Activated CD4-positive, alpha-beta T cell treated with anti-CD3 and anti-CD28 coated beads, Interleukin-2, amount 10 ng/mL, durations not matched to agents 24 days and 14 days (primary cell): ENCODE measurements at regions of chr15 and their contacts with region 1.

Region 1: DNA sequence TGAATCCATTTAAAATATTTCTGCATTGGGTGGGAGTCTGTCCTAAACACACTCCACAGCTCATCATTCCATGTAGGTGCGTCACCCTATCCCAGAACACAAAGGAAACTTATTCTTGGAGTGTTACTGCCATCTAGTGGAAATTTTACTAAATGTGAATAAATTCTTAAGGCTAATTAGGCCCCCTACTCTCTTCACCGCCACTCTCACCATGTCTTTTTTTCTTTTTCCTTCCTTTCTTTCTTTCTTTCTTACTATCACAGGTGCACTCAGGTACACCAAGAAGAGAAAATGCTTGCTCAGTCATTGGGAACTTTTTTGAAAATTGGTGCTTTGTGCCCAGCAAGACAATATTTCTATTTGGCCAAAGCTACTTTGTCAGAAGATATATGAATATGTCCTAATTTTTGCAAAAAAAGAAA is 26.4 kb upstream of the ATP8B4 start:
- DNase-seq: peak; percentile 62
- H3K4me3 Mint-ChIP-seq: no peak overlapping the region
- H3K27ac Mint-ChIP-seq: no peak overlapping the region
- H3K4me1 Mint-ChIP-seq: peaks cover 45% of the 10 kb centered on the region
- H3K27me3 Mint-ChIP-seq: no peaks in the 10 kb centered on the region

Region 2: DNA sequence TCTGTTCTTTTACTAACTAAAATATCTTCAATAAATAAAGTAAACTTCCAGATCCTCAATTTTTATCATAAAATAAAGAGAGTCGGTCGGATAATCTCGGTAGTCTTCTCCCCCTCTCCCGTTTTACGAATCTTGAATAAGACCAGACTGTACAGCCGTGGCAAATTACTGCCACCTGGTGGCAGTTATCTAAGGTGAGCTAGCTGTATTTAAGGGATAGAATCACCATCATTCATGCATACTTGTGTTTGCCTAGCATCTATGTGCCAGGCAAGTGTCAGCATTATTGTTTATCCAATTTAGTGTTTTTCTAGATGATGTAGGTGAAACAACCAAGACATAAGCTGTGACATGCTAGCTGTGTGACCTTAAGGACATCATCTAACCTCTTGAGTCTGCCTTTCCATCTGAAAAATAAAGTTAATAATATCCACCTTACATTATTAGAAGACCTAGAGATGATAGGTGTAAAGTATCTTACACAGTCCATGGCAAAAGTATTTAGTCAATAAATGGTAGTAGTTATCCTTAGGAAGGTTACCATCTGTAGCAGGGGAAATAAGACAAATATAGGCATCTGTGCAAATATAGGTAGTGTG is 1792.9 kb before region 1 on chr15:
- intact Hi-C with region 1: loop called (anchors 10 kb)
- DNase-seq: peak; percentile 86
- H3K4me3 Mint-ChIP-seq: no peak overlapping the region
- H3K27ac Mint-ChIP-seq: no peak overlapping the region
- H3K4me1 Mint-ChIP-seq: peaks cover 2% of the 10 kb centered on the region
- H3K27me3 Mint-ChIP-seq: no peaks in the 10 kb centered on the region

Region 3: DNA sequence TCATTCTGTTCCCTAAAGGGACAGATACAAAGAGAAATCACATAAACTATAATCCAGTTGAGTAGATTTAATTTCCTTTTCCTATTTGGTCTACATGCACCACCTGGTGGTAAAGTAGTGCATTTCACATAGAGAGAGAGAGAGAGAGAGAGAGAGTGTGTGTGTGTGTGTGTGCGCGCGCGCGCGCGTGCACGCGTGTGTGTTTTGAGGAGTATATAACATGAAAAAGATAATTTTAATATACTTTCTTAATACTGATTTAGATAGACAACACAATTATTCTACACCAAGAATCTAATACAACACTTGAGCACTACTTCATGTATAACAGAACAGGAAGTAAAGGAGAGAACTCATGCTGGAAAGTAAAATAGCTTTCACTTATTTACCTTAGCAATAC is 723.5 kb before region 1 on chr15:
- intact Hi-C with region 1: loop called (anchors 10 kb)
- DNase-seq: peak; percentile 73
- H3K4me3 Mint-ChIP-seq: peak overlapping the region; percentile 2
- H3K27ac Mint-ChIP-seq: peak overlapping the region; percentile 23
- H3K4me1 Mint-ChIP-seq: peaks cover 4% of the 10 kb centered on the region
- H3K27me3 Mint-ChIP-seq: peaks cover 8% of the 10 kb centered on the region

Region 4: DNA sequence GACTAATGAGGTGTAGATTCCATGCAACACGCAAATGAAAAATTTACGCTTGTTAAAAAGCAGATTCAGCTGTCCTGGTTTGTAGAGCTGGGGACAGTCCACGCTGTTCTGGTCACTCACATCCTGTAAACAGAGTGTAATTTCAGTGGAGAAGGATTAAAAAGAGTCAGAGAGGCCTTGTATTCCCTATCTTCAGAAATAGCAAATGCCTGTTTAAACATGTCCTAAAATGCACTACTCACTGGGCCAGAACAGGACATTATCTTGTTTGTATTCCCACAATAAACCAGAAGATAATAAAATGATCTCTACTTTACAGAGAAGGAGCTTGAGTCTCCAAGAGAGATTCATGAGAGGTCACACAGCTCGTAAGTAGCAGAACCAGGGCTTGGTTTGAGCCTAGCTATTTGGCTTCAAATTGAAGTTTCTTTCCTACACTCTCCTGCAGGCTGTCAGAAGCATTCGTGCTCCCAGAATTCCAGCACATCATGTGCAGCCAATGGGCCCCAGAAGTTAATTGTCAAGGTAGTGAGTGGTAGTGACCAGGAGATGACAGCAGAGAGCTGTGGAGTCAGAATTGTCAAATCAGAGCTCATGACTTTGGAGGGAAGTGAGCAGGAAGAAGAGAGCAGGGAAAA is 268.9 kb before region 1 on chr15:
- intact Hi-C with region 1: loop called (anchors 5 kb)
- DNase-seq: no peak
- H3K4me3 Mint-ChIP-seq: no peak overlapping the region
- H3K27ac Mint-ChIP-seq: no peak overlapping the region
- H3K4me1 Mint-ChIP-seq: no peaks in the 10 kb centered on the region
- H3K27me3 Mint-ChIP-seq: no peaks in the 10 kb centered on the region

Region 5: DNA sequence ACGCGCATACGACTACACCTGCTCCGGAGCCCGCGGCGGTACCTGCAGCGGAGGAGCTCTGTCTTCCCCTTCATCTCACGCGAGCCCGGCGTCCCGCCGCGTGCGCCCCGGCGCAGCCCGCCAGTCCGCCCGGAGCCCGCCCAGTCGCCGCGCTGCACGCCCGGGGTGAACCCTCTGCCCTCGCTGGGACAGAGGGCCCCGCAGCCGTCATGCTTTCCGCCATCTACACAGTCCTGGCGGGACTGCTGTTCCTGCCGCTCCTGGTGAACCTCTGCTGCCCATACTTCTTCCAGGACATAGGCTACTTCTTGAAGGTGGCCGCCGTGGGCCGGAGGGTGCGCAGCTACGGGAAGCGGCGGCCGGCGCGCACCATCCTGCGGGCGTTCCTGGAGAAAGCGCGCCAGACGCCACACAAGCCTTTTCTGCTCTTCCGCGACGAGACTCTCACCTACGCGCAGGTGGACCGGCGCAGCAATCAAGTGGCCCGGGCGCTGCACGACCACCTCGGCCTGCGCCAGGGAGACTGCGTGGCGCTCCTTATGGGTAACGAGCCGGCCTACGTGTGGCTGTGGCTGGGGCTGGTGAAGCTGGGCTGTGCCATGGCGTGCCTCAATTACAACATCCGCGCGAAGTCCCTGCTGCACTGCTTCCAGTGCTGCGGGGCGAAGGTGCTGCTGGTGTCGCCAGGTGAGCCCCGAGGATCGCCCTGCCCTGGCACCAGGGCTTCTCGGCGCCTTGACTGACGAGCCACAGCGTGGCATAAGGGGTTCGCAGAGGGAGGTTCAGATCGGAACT is 37.0 kb after region 1 on chr15:
- intact Hi-C with region 1: no loop called
- DNase-seq: peak; percentile 87
- H3K4me3 Mint-ChIP-seq: peak overlapping the region; percentile 98
- H3K27ac Mint-ChIP-seq: peak overlapping the region; percentile 87
- H3K4me1 Mint-ChIP-seq: peaks cover 51% of the 10 kb centered on the region
- H3K27me3 Mint-ChIP-seq: no peaks in the 10 kb centered on the region

Region 6: DNA sequence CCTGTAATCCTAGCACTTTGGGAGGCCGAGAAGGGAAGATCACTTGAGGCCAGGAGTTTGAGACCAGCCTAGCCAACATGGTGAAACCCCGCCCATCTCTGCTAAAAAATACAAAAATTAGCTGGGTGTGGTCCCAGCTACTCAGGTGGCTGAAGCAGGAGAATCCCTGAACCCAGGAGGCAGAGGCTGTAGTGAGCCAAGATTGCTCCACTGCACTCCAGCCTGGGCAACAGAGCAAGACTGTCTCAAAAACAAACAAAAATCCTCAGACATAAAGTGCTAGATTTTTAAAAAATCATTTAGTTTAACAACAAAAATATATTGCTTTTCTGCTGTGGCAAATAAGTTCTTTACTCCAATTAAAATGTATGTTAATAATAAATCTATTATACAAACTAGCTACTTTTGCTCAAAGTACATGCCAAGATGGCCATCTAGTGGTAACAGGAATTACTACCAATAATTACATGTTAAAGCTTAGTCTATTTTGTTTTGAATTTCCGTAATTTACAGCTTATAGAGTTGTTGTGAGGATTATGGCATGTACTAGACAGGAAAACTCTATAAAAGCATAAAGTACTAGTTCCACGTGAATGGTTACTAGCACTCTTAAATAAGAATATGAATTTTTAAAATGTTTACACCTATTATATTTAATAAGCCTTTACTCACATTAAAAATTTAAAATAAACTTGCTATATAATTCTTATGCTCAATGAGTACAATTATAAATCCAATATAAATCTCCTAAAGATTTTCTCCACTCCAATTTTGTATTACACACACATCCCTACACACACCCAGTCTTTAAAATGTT is 170.6 kb after region 1 on chr15:
- intact Hi-C with region 1: loop called (anchors 5 kb)
- DNase-seq: peak; percentile 65
- H3K4me3 Mint-ChIP-seq: no peak overlapping the region
- H3K27ac Mint-ChIP-seq: no peak overlapping the region
- H3K4me1 Mint-ChIP-seq: peaks cover 32% of the 10 kb centered on the region
- H3K27me3 Mint-ChIP-seq: no peaks in the 10 kb centered on the region